ENCODE measurements at regions of chr10 and their contacts with region 1.

Region 1: DNA sequence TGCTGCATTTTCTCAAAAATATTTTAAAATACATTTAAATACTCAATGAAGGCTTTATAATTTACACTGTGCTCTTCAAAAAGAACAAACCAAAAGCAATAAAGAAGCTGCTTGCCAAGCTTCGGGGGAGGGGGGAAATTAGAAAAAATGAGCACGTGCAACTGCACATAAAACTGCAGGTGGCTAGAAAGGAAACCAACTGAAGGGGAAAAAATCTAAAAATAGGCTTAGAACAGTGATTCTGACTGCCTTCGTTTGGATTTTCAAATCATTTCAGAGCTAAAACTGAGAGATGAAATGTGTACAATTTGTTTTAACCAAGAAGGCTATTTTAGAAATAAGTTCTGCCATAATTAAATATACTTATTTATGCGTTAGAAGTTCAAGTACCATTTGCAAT is 61.4 kb downstream of the ABI1 start:
- DNase-seq: peak; percentile 97
- H3K4me3 ChIP-seq: peak overlapping the region; percentile 56
- H3K27ac ChIP-seq: peak overlapping the region; percentile 100
- H3K4me1 ChIP-seq: peaks cover 85% of the 10 kb centered on the region
- CTCF ChIP-seq: no peak

Region 2: DNA sequence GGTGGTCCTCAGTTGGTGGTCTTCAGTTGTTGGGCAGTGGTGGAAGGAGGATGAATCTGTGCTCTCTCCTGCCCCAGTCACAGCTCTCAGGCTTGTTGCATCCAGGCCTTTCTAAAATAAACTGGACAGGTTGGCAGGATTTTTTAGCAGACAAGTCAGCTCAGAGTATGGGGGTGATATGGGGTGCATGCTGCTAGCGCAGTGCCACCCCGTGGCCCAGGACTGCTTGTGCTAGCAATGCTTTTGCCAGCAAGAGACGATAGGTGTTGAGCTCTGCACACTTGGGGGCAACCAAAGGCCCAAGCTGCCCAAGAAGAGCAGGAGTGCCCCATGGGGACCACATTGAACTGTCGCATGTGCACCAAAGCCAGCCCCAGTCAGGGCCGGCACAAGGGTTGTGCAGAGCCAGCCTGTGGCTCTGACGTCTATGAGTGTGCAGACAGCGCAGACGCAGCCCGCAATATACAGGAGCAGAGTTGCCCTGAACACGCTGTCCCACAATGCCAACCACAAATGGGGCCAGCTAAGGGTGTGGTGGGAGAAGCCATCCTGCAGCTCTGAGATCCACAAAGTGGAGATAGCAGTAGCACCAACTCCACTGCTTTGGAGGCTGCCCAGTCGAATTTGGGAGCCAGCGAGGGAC is 151.6 kb before region 1 on chr10:
- CTCF ChIA-PET with region 1: no interaction called
- POLR2A ChIA-PET with region 1: no interaction called
- intact Hi-C with region 1: no loop called
- DNase-seq: no peak
- H3K4me3 ChIP-seq: no peak overlapping the region
- H3K27ac ChIP-seq: no peak overlapping the region
- H3K4me1 ChIP-seq: no peaks in the 10 kb centered on the region
- CTCF ChIP-seq: no peak

Region 3: DNA sequence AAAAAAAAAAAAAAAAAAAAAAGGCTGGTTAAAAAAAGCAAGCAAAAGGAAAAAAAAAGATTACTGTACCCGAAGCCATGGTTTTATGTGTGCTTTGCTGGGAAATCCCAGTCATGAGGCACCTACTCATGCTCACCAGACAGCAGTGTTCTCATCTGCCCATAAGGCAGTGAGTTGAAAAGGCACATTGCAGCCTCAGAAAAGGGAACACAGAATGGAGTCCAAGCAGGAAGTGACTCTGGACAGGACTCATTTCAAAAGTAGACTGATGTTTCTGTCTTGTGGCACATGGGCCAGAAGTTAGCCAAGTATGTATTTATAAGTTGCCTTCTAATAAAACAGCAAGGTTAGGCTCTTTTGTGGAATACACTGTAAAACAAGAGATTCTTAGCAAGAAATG is 61.6 kb before region 1 on chr10:
- CTCF ChIA-PET with region 1: no interaction called
- POLR2A ChIA-PET with region 1: interaction called, 6 read pairs
- intact Hi-C with region 1: loop called (anchors 5 kb)
- DNase-seq: peak; percentile 64
- H3K4me3 ChIP-seq: no peak overlapping the region
- H3K27ac ChIP-seq: peak overlapping the region; percentile 71
- H3K4me1 ChIP-seq: peaks cover 30% of the 10 kb centered on the region
- CTCF ChIP-seq: no peak

Region 4: GRCh38 chr10:26787362-26787761 is 12.0 kb before region 1 on chr10:
- CTCF ChIA-PET with region 1: interaction called, 3 read pairs
- POLR2A ChIA-PET with region 1: interaction called, 24 read pairs
- intact Hi-C with region 1: no loop called
- DNase-seq: no peak
- H3K4me3 ChIP-seq: no peak overlapping the region
- H3K27ac ChIP-seq: no peak overlapping the region
- H3K4me1 ChIP-seq: peaks cover 41% of the 10 kb centered on the region
- CTCF ChIP-seq: no peak

Region 5: DNA sequence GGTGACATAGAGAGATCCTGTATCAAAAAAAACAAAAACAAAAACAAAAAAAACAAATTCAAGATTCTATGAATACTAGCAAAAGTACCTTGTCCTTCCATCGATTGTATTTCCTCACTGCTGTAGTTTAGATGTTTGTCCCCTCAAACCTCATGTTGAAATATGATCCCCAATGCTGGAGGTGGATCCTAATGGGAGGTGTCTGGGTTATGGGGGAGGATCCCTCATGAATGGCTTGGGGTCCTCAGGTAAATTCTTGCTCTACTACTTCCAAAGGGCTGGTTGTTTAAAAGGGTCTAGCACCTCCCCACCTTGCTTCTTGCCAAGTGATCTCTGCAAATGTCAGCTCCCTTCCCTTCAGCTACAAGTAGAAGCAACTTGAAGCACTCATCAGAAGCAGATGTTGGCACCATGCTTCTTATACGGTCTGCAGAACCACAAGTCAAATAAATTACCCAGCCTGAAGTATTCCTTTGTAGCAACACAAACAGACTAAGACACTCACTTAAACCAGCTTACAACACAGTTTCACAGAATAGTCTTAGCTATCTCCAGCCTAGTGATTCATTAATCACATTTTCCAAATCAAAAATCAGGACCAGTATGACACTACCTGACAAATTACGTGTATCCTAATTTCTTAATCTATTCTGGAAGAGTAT is 40.8 kb after region 1 on chr10:
- CTCF ChIA-PET with region 1: no interaction called
- POLR2A ChIA-PET with region 1: interaction called, 5 read pairs
- intact Hi-C with region 1: loop called (anchors 5 kb)
- DNase-seq: no peak
- H3K4me3 ChIP-seq: no peak overlapping the region
- H3K27ac ChIP-seq: no peak overlapping the region
- H3K4me1 ChIP-seq: peaks cover 25% of the 10 kb centered on the region
- CTCF ChIP-seq: no peak

Region 6: GRCh38 chr10:26911811-26912461 is 112.6 kb after region 1 on chr10:
- CTCF ChIA-PET with region 1: no interaction called
- POLR2A ChIA-PET with region 1: no interaction called
- intact Hi-C with region 1: no loop called
- DNase-seq: peak; percentile 53
- H3K4me3 ChIP-seq: no peak overlapping the region
- H3K27ac ChIP-seq: no peak overlapping the region
- H3K4me1 ChIP-seq: peaks cover 11% of the 10 kb centered on the region
- CTCF ChIP-seq: no peak

Region 7: GRCh38 chr10:26987851-26988337 is 188.6 kb after region 1 on chr10:
- CTCF ChIA-PET with region 1: no interaction called
- POLR2A ChIA-PET with region 1: no interaction called
- intact Hi-C with region 1: no loop called
- DNase-seq: no peak
- H3K4me3 ChIP-seq: no peak overlapping the region
- H3K27ac ChIP-seq: no peak overlapping the region
- H3K4me1 ChIP-seq: no peaks in the 10 kb centered on the region
- CTCF ChIP-seq: no peak